Activated naive CD8-positive, alpha-beta T cell treated with anti-CD3 and anti-CD28 coated beads, Interleukin-2, amount 10 ng/mL, durations not matched to agents 7 days and 5 days (primary cell): ENCODE measurements at regions of chr12 and their contacts with region 1.

Region 1: DNA sequence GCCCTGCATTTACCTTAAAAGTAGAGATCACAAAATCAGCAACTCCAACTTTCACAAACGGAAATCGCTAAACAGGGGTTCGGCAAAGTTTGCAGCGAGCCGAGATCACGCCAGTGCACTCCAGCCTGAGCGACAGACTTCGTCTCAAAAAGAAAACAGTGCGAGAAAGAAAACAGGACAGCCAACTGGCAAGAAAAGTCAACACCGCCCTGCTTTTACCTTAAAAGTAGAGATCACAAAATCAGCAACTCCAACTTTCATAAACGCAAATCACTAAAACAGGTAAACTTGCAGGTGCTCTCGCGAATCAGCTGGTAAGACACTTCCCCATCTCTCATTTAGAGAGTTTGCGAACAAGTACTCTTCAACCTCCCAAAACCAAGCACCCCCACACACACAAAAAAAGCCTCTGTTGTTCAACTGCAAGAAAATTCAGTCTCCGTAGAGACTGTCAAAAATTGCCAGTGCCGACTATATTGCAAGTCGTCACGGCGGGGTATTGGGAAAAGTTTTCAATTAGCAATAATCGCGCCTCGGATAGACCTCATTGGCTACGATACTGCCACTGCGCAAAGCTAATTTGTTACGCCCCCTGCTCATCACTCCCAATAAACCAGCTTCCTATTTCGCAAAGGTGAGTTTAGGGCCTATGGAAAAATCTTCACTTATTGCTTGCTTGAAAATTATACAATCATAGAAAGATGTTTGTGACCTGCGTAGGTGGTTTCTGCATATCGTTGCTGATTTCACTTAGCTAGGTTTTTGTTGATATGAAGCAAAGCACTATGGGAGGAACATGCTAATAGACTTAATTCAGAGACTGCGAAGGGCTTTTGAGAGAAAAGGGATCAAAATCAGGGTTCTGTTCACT is at the start of gene RNU4-1:
- DNase-seq: peak; percentile 62
- ATAC-seq: peak; percentile 40
- H3K4me3 Mint-ChIP-seq: no peak within 1 kb of the TSS
- H3K27ac Mint-ChIP-seq: no peak within 1 kb of the TSS
- H3K4me1 Mint-ChIP-seq: peaks cover 5% of the 10 kb centered on the region
- H3K27me3 Mint-ChIP-seq: no peaks in the 10 kb centered on the region
- total RNA-seq, gene RNU4-1: 1,307 to 1,401 TPM

Region 2: GRCh38 chr12:120186654-120187053 is 106.2 kb before region 1 on chr12:
- POLR2A ChIA-PET with region 1: no interaction called
- DNase-seq: no peak
- ATAC-seq: no peak
- H3K4me3 Mint-ChIP-seq: no peak overlapping the region
- H3K27ac Mint-ChIP-seq: no peak overlapping the region
- H3K4me1 Mint-ChIP-seq: peaks cover 7% of the 10 kb centered on the region
- H3K27me3 Mint-ChIP-seq: no peaks in the 10 kb centered on the region

Region 3: GRCh38 chr12:120199595-120200306 is 93.1 kb before region 1 on chr12:
- POLR2A ChIA-PET with region 1: interaction called, 149 read pairs
- DNase-seq: no peak
- ATAC-seq: no peak
- H3K4me3 Mint-ChIP-seq: peak overlapping the region; percentile 98
- H3K27ac Mint-ChIP-seq: peak overlapping the region; percentile 97
- H3K4me1 Mint-ChIP-seq: peaks cover 28% of the 10 kb centered on the region
- H3K27me3 Mint-ChIP-seq: no peaks in the 10 kb centered on the region

Region 4: DNA sequence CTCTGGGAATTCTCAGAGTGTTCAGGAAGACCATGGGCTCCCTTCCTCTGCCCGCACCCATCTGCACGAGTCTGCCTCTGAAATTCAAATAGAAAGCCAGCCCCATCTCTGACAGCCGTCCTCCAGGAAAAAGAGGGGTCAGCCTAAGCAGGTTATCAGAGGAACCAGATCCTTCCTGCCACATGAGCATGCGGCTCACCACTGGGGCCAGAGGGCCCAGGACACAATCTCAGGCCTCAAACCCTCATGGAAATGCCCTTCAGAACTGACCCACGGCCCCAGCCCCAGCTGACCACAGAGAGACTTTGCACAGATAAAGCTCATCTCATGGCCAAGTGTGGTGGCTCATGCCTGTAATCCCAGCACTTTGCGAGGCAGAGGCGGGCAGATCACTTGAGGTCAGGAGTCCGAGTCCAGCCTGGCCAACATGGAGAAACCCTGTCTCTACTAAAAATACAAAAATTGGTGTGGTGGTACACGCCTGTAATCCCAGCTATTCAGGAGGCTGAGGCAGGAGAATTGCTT is 50.6 kb before region 1 on chr12:
- POLR2A ChIA-PET with region 1: interaction called, 110 read pairs
- DNase-seq: no peak
- ATAC-seq: no peak
- H3K4me3 Mint-ChIP-seq: no peak overlapping the region
- H3K27ac Mint-ChIP-seq: no peak overlapping the region
- H3K4me1 Mint-ChIP-seq: peaks cover 21% of the 10 kb centered on the region
- H3K27me3 Mint-ChIP-seq: no peaks in the 10 kb centered on the region

Region 5: GRCh38 chr12:120265473-120266179 is 27.3 kb before region 1 on chr12 and contains the start of gene PXN:
- POLR2A ChIA-PET with region 1: interaction called, 128 read pairs
- DNase-seq: peak; percentile 98
- ATAC-seq: peak; percentile 83
- H3K4me3 Mint-ChIP-seq: peak within 1 kb of the TSS; percentile 91
- H3K27ac Mint-ChIP-seq: peak within 1 kb of the TSS; percentile 79
- H3K4me1 Mint-ChIP-seq: peaks cover 35% of the 10 kb centered on the region
- H3K27me3 Mint-ChIP-seq: no peaks in the 10 kb centered on the region
- total RNA-seq, gene PXN: 89.0 to 94.7 TPM

Region 6: DNA sequence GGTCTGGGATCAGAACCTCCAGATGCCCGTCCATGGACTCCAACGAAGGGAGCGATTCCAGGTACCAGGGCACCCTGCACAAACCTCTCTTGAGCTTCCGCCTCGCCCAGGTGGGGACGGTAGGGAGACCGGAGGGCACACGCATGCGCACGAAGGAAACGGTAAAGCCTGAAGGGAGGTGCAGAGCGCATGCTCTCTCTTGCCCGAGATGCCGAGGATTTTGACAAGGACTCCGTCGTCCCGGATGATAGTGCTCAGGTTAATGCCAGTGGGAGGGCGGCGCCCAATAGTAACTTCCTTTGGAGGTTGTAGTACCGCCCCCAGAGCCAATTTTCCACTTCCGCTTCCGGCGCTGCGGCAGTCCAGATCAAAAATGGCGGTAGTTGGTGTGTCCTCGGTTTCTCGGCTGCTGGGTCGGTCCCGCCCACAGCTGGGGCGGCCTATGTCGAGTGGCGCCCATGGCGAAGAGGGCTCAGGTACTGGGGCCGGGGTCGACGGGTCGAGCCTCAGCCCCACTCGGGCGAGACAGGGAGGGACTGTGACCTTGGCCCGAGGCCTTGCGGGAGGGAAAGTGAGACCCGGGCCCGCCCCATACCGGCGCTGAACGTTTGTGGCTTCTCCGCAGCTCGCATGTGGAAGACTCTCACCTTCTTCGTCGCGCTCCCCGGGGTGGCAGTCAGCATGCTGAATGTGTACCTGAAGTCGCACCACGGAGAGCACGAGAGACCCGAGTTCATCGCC is 145.0 kb after region 1 on chr12 and contains the start of gene COX6A1:
- POLR2A ChIA-PET with region 1: interaction called, 12 read pairs
- DNase-seq: peak; percentile 91
- ATAC-seq: peak; percentile 97
- H3K4me3 Mint-ChIP-seq: peak within 1 kb of the TSS; percentile 99
- H3K27ac Mint-ChIP-seq: peak within 1 kb of the TSS; percentile 95
- H3K4me1 Mint-ChIP-seq: peaks cover 26% of the 10 kb centered on the region
- H3K27me3 Mint-ChIP-seq: no peaks in the 10 kb centered on the region
- total RNA-seq, gene COX6A1: 248 to 276 TPM

Region 7: DNA sequence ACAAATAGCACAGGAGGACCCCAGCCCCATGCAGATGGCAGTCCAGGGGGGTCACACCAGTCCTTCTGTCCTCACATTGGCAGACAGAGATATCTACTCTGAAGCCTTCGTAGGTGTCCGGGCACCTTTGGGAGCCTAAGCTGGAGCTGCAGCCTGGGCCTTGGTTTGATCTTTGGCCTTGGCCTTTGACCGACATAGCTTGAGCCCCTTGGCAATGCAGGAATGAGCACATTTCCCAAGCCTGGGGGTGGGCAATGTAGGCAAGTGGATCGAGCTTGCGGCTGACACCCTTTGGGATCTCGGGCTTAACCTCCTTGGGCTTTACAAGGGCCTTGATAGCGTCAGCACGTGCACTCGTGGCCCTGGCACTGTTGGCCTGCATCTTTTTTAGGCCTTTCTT is 229.7 kb after region 1 on chr12:
- POLR2A ChIA-PET with region 1: no interaction called
- DNase-seq: no peak
- ATAC-seq: no peak
- H3K4me3 Mint-ChIP-seq: no peak overlapping the region
- H3K27ac Mint-ChIP-seq: no peak overlapping the region
- H3K4me1 Mint-ChIP-seq: peaks cover 3% of the 10 kb centered on the region
- H3K27me3 Mint-ChIP-seq: no peaks in the 10 kb centered on the region

Region 8: DNA sequence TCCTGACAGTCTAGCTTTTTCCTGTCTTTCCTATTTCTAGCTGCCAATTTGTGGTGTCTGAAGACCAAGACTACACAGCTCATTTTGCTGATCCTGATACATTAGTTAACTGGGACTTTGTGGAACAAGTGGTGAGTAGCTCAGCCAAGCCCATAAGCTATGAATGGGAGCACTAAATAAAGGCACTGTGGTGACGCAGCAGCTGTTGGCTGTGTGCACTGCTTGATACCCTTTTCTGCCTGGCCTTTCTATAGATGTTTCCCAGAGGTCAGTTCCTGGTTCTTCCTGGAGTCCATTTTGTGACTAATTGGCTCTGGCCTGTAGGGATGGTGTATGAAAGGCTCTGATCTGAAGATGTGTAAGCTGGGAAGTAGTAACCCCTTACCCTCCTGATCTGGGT is 261.8 kb after region 1 on chr12:
- POLR2A ChIA-PET with region 1: interaction called, 10 read pairs
- DNase-seq: no peak
- ATAC-seq: no peak
- H3K4me3 Mint-ChIP-seq: no peak overlapping the region
- H3K27ac Mint-ChIP-seq: no peak overlapping the region
- H3K4me1 Mint-ChIP-seq: peaks cover 5% of the 10 kb centered on the region
- H3K27me3 Mint-ChIP-seq: no peaks in the 10 kb centered on the region